ENCODE measurements at regions of chr1 and their contacts with region 1.

Region 1: DNA sequence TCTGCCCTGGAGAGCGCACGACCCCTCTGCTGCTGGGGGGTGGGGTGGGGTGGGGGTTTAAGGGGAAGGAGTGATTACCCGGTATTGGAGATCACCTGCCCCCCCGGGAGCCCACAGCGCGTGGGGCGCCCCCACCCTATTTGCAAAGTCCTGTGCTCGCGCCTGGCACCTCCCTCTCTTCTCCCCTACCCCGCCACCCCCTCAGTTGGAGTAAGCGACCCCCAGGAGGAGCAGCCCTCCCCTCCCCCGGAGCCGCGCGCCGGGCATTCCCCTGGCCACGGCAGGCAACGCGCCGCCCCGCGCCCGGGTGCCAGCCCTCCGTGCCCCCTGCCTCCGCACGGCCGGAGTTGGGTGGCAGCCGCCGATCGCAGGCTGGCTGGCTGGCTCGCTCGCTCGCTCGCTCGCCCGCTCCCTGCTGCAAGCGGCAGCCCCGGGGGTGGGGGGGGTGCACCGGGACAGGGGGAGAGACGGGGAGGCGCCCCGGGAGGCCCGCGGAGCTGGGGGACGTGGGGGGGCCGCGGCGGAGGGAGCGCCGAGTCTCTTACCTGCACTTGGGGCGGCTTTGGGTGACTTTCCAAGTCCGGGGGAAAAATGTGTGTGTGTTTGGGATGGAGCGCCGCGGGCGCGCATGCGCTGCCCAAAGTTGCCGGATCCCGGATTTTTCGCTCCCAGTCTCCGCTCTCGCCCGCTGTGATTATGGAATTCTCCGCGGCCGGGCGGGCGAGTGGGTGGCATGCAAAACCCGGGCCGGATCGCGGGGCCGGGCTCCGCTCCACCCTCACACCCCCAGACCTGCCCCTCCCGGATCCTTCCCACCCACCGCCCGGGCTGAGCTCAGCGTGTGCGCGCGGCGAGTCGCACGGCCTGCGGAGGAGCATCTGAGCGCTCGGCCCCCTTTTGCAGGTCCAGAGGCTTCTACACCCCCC is at the start of gene CASZ1:
- DNase-seq: peak; percentile 71 to 84
- ATAC-seq: peak; percentile 44 to 51
- H3K4me3 ChIP-seq: peak within 1 kb of the TSS; percentile 80 to 98 (median 90)
- H3K27ac ChIP-seq: peak within 1 kb of the TSS; percentile 98 to 100 (median 99)
- H3K4me1 ChIP-seq: peaks cover 17 to 18% of the 10 kb centered on the region in 2 donors
- H3K27me3 ChIP-seq: no peaks in the 10 kb centered on the region
- CTCF ChIP-seq: peak in 2 of 5 experiments; percentile 36 to 56
- POLR2A ChIP-seq: peak; percentile 85
- total RNA-seq, gene CASZ1: 19.1 to 121 (median 80.6) TPM

Region 2: GRCh38 chr1:10507111-10507879 is 289.0 kb before region 1 on chr1:
- in situ Hi-C with region 1: no loop called
- intact Hi-C with region 1: loop called (anchors 2 kb)
- DNase-seq: peak; percentile 56 to 73
- ATAC-seq: peak; percentile 89 to 93
- H3K4me3 ChIP-seq: no peak overlapping the region
- H3K27ac ChIP-seq: no peak overlapping the region
- H3K4me1 ChIP-seq: peaks cover 33 to 34% of the 10 kb centered on the region in 2 donors
- H3K27me3 ChIP-seq: no peaks in the 10 kb centered on the region
- CTCF ChIP-seq: peak; percentile 83 to 90 (median 87)
- POLR2A ChIP-seq: no peak

Region 3: GRCh38 chr1:10663678-10664035 is 132.6 kb before region 1 on chr1:
- in situ Hi-C with region 1: no loop called
- intact Hi-C with region 1: loop called (anchors 1 kb)
- DNase-seq: peak in 1 of 2 donors; percentile 64
- ATAC-seq: peak; percentile 7 to 34
- H3K4me3 ChIP-seq: no peak overlapping the region
- H3K27ac ChIP-seq: peak overlapping the region; percentile 89 to 95 (median 92)
- H3K4me1 ChIP-seq: peaks cover 50 to 58% of the 10 kb centered on the region in 2 donors
- H3K27me3 ChIP-seq: no peaks in the 10 kb centered on the region
- CTCF ChIP-seq: no peak
- POLR2A ChIP-seq: no peak

Region 4: DNA sequence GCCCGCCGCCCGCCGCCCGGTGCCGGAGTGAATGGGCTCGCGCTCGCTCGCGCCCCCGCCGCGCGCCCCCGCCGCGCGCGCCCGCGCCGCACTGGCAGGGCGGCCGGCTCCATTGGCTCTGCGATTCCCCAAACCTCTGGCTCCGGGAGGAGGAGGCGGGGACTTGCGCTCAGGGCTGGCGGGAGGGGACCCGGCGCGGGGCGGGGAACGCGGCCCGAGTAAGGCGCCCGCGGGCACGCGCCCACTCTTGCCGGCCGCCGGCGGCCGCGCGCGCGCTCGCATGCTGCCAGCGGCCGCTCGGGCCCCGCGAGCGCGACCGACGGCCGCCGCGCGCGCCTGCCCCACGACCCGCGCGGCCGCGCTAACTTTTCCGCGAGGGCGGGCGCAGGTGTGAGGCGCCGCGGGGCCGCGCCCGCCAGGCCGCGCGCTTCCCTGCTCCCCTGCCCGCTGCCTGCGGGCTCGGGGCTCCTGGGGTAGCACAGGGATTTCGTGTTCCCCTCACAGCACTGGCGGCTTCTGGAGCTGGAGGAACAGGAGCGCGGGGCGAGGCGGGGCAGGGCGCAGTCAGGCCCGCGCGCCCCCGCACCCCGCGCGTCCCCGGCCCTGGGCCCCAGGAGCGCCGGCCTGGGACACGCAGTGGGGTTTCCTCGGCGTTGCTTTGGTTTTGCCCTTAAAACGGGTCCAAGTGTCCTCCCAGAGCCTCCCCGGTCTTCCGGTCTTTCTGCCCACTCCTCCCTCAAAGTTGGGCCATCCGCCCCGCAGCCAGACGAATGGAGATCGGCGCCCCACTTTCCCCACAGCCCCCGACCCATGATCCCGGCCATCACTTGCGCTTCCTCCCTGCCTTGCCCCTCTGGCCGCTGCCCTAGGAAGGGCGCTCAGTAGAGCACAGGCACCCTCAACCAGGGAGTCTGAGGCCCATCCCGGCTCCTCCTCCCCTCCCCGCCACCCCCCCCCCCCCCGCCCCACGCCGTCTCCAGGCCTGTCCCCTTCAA is 101.4 kb before region 1 on chr1:
- in situ Hi-C with region 1: loop called in 2 of 4 experiments (anchors 25 kb)
- intact Hi-C with region 1: loop called (anchors 1 kb)
- DNase-seq: peak; percentile 85 to 90
- ATAC-seq: peak; percentile 75 to 76
- H3K4me3 ChIP-seq: peak overlapping the region; percentile 43 to 72 (median 54)
- H3K27ac ChIP-seq: peak overlapping the region; percentile 82 to 90 (median 86)
- H3K4me1 ChIP-seq: peaks cover 45 to 62% of the 10 kb centered on the region in 2 donors
- H3K27me3 ChIP-seq: no peaks in the 10 kb centered on the region
- CTCF ChIP-seq: no peak
- POLR2A ChIP-seq: peak; percentile 11 to 36

Region 5: GRCh38 chr1:10745886-10746455 is 50.3 kb before region 1 on chr1:
- in situ Hi-C with region 1: no loop called
- intact Hi-C with region 1: loop called (anchors 2 kb)
- DNase-seq: peak; percentile 93 to 98
- ATAC-seq: peak; percentile 90 to 92
- H3K4me3 ChIP-seq: peak overlapping the region; percentile 22 to 42 (median 34)
- H3K27ac ChIP-seq: peak overlapping the region; percentile 95 to 97 (median 96)
- H3K4me1 ChIP-seq: peaks cover 40 to 55% of the 10 kb centered on the region in 2 donors
- H3K27me3 ChIP-seq: no peaks in the 10 kb centered on the region
- CTCF ChIP-seq: peak in 1 of 5 experiments; percentile 15
- POLR2A ChIP-seq: peak; percentile 66 to 70

Region 6: GRCh38 chr1:10941891-10942541 is 145.7 kb after region 1 on chr1:
- in situ Hi-C with region 1: no loop called
- intact Hi-C with region 1: loop called (anchors 10 kb)
- DNase-seq: peak in 1 of 2 donors; percentile 43
- ATAC-seq: peak in 1 of 2 donors; percentile 55
- H3K4me3 ChIP-seq: peak overlapping the region in 2 of 4 donors; percentile 7 to 22
- H3K27ac ChIP-seq: no peak overlapping the region
- H3K4me1 ChIP-seq: peaks cover 7 to 18% of the 10 kb centered on the region in 2 donors
- H3K27me3 ChIP-seq: no peaks in the 10 kb centered on the region
- CTCF ChIP-seq: peak; percentile 66 to 93 (median 89)
- POLR2A ChIP-seq: no peak

Measured in gastrocnemius medialis (tissue), 4 donors.